ENCODE measurements at regions of chr19 and their contacts with region 1.

Region 1: GRCh38 chr19:56333505-56333904 is 18.9 kb upstream of the ZSCAN5A start:
- DNase-seq: peak in 26 of 35 experiments; percentile 2 to 69 (median 26)
- ATAC-seq: peak in 1 of 4 experiments; percentile 50
- H3K4me3 ChIP-seq: no peak overlapping the region
- H3K4me3 Mint-ChIP-seq: no peak overlapping the region
- H3K27ac ChIP-seq: no peak overlapping the region
- H3K27ac Mint-ChIP-seq: no peak overlapping the region
- H3K4me1 ChIP-seq: no peaks in the 10 kb centered on the region
- H3K4me1 Mint-ChIP-seq: no peaks in the 10 kb centered on the region
- H3K27me3 ChIP-seq: no peaks in the 10 kb centered on the region
- H3K27me3 Mint-ChIP-seq: peaks cover 9 to 10% of the 10 kb centered on the region in 2 donors

Region 2: GRCh38 chr19:56252699-56253422 is 80.6 kb before region 1 on chr19:
- CTCF ChIA-PET with region 1: interaction called, 16 to 78 read pairs
- POLR2A ChIA-PET with region 1: interaction called in 1 of 2 experiments, 3 read pairs
- DNase-seq: peak; percentile 25 to 72 (median 60)
- ATAC-seq: peak in 3 of 4 experiments; percentile 31 to 59 (median 49)
- H3K4me3 ChIP-seq: no peak overlapping the region
- H3K4me3 Mint-ChIP-seq: no peak overlapping the region
- H3K27ac ChIP-seq: no peak overlapping the region
- H3K27ac Mint-ChIP-seq: no peak overlapping the region
- H3K4me1 ChIP-seq: peaks cover 0 to 6% of the 10 kb centered on the region in 2 experiments
- H3K4me1 Mint-ChIP-seq: peaks cover 0 to 3% (median 0%) of the 10 kb centered on the region in 3 donors
- H3K27me3 ChIP-seq: no peaks in the 10 kb centered on the region
- H3K27me3 Mint-ChIP-seq: peaks cover 0 to 2% of the 10 kb centered on the region in 2 donors

Measured in T-cell (primary cell).